CD4-positive, alpha-beta memory T cell (primary cell): ENCODE measurements at regions of chr9 and their contacts with region 1.

Region 1: GRCh38 chr9:130042833-130043653 is at the start of gene FNBP1:
- DNase-seq: peak; percentile 82 to 88 (median 84)
- H3K4me3 ChIP-seq: peak within 1 kb of the TSS; percentile 89
- H3K4me3 Mint-ChIP-seq: peak within 1 kb of the TSS; percentile 98 to 100 (median 99)
- H3K27ac ChIP-seq: peak within 1 kb of the TSS; percentile 95
- H3K27ac Mint-ChIP-seq: peak within 1 kb of the TSS; percentile 96 to 99 (median 99)
- H3K4me1 ChIP-seq: peaks cover 41% of the 10 kb centered on the region
- H3K4me1 Mint-ChIP-seq: peaks cover 32 to 69% (median 43%) of the 10 kb centered on the region in 4 donors
- H3K27me3 ChIP-seq: no peaks in the 10 kb centered on the region
- H3K27me3 Mint-ChIP-seq: no peaks in the 10 kb centered on the region
- total RNA-seq, gene FNBP1: 197 to 202 TPM

Region 2: GRCh38 chr9:129835021-129835871 is 207.8 kb before region 1 on chr9 and contains the starts of genes C9orf78 and USP20:
- CTCF ChIA-PET with region 1: no interaction called
- POLR2A ChIA-PET with region 1: interaction called, 10 read pairs
- intact Hi-C with region 1: no loop called
- DNase-seq: peak; percentile 95 to 98 (median 98)
- H3K4me3 ChIP-seq: peak within 1 kb of the TSS; percentile 76 to 98
- H3K4me3 Mint-ChIP-seq: peak within 1 kb of the TSS; percentile 96 to 99 (median 98)
- H3K27ac ChIP-seq: peak within 1 kb of the TSS; percentile 92
- H3K27ac Mint-ChIP-seq: peak within 1 kb of the TSS; percentile 97 to 99 (median 99)
- H3K4me1 ChIP-seq: peaks cover 59% of the 10 kb centered on the region
- H3K4me1 Mint-ChIP-seq: peaks cover 40 to 69% (median 56%) of the 10 kb centered on the region in 4 donors
- H3K27me3 ChIP-seq: no peaks in the 10 kb centered on the region
- H3K27me3 Mint-ChIP-seq: no peaks in the 10 kb centered on the region
- total RNA-seq, gene C9orf78: 95.5 to 96.9 TPM
- total RNA-seq, gene USP20: 123 to 132 TPM

Region 3: GRCh38 chr9:129944506-129945116 is 98.4 kb before region 1 on chr9:
- CTCF ChIA-PET with region 1: interaction called, 6 read pairs
- POLR2A ChIA-PET with region 1: interaction called, 21 read pairs
- intact Hi-C with region 1: loop called (anchors 5 kb)
- DNase-seq: peak; percentile 70 to 83 (median 80)
- H3K4me3 ChIP-seq: no peak overlapping the region
- H3K4me3 Mint-ChIP-seq: peak overlapping the region; percentile 33 to 80 (median 52)
- H3K27ac ChIP-seq: peak overlapping the region; percentile 60
- H3K27ac Mint-ChIP-seq: peak overlapping the region; percentile 35 to 92 (median 85)
- H3K4me1 ChIP-seq: peaks cover 59% of the 10 kb centered on the region
- H3K4me1 Mint-ChIP-seq: peaks cover 35 to 70% (median 50%) of the 10 kb centered on the region in 4 donors
- H3K27me3 ChIP-seq: no peaks in the 10 kb centered on the region
- H3K27me3 Mint-ChIP-seq: no peaks in the 10 kb centered on the region

Region 4: DNA sequence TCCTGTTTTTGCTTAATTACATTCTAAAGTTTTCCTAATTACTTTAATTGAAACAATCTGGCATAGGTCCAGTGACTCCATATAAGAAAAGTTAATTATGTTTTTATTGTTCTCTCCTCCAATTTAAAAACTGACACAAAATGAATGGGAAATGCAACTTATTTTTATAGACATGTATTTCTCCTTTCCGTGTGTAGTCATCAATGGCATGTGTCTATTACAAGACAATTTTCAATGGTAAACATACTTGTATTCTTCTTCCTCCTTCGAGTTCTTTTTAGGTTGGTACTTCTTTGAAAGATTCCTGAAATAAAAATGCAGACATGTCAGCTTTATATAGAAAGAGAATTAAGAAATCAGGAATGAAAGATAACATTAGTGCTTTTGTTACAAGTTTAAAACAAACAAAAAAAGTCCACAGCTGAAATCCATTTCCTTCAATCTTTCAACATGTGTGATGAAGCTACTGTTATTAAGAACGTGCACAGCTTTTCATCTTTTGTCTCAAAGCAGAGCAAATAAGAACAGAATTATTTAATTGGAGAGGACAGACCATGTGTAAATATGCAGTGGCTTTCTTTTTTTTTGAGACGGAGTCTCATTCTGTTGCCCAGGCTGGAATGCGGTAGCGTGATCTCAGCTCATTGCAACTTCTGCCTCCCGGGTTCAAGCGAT is 63.8 kb before region 1 on chr9:
- CTCF ChIA-PET with region 1: interaction called, 10 read pairs
- POLR2A ChIA-PET with region 1: interaction called, 5 read pairs
- intact Hi-C with region 1: no loop called
- DNase-seq: no peak
- H3K4me3 ChIP-seq: no peak overlapping the region
- H3K4me3 Mint-ChIP-seq: no peak overlapping the region
- H3K27ac ChIP-seq: no peak overlapping the region
- H3K27ac Mint-ChIP-seq: peak overlapping the region in 6 of 7 donors; percentile 18 to 70 (median 44)
- H3K4me1 ChIP-seq: peaks cover 24% of the 10 kb centered on the region
- H3K4me1 Mint-ChIP-seq: peaks cover 25 to 51% (median 30%) of the 10 kb centered on the region in 4 donors
- H3K27me3 ChIP-seq: no peaks in the 10 kb centered on the region
- H3K27me3 Mint-ChIP-seq: no peaks in the 10 kb centered on the region

Region 5: GRCh38 chr9:130010151-130010988 is 32.7 kb before region 1 on chr9:
- CTCF ChIA-PET with region 1: interaction called, 3 read pairs
- POLR2A ChIA-PET with region 1: interaction called, 58 read pairs
- intact Hi-C with region 1: loop called (anchors 5 kb)
- DNase-seq: peak; percentile 64 to 93 (median 74)
- H3K4me3 ChIP-seq: no peak overlapping the region
- H3K4me3 Mint-ChIP-seq: peak overlapping the region; percentile 32 to 85 (median 52)
- H3K27ac ChIP-seq: peak overlapping the region; percentile 88
- H3K27ac Mint-ChIP-seq: peak overlapping the region; percentile 93 to 100 (median 98)
- H3K4me1 ChIP-seq: peaks cover 95% of the 10 kb centered on the region
- H3K4me1 Mint-ChIP-seq: peaks cover 49 to 89% (median 67%) of the 10 kb centered on the region in 4 donors
- H3K27me3 ChIP-seq: no peaks in the 10 kb centered on the region
- H3K27me3 Mint-ChIP-seq: no peaks in the 10 kb centered on the region

Region 6: GRCh38 chr9:130053504-130054324 is 10.7 kb after region 1 on chr9 and contains the start of gene GPR107:
- CTCF ChIA-PET with region 1: interaction called, 10 read pairs
- POLR2A ChIA-PET with region 1: interaction called, 66 read pairs
- intact Hi-C with region 1: loop called (anchors 1 kb)
- DNase-seq: peak; percentile 71 to 80 (median 79)
- H3K4me3 ChIP-seq: peak within 1 kb of the TSS; percentile 67 to 98
- H3K4me3 Mint-ChIP-seq: peak within 1 kb of the TSS; percentile 90 to 95 (median 95)
- H3K27ac ChIP-seq: peak within 1 kb of the TSS; percentile 95
- H3K27ac Mint-ChIP-seq: peak within 1 kb of the TSS; percentile 91 to 97 (median 95)
- H3K4me1 ChIP-seq: peaks cover 29% of the 10 kb centered on the region
- H3K4me1 Mint-ChIP-seq: peaks cover 18 to 38% (median 28%) of the 10 kb centered on the region in 4 donors
- H3K27me3 ChIP-seq: no peaks in the 10 kb centered on the region
- H3K27me3 Mint-ChIP-seq: no peaks in the 10 kb centered on the region
- total RNA-seq, gene GPR107: 23.8 to 24.4 TPM

Region 7: DNA sequence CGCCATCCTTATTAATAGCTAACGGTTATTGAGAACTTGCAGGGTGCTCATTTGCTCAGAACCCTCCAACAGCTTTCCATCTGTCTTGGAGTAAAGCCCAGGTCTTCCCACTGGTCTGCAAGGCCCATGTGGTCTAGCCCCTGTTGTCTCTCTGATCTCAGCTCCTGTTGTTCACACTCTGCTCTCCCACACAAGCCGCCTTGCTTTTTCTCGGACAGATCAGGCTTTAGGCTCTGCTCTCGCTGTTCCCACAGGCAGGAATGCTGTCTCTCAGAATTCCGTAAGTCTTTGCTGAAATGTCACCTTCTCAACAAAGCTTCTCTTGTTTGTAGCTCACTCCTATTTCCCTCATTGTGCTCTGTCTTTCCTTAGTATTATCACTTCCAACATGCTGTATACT is 45.0 kb after region 1 on chr9:
- CTCF ChIA-PET with region 1: no interaction called
- POLR2A ChIA-PET with region 1: no interaction called
- intact Hi-C with region 1: no loop called
- DNase-seq: no peak
- H3K4me3 ChIP-seq: no peak overlapping the region
- H3K4me3 Mint-ChIP-seq: no peak overlapping the region
- H3K27ac ChIP-seq: no peak overlapping the region
- H3K27ac Mint-ChIP-seq: peak overlapping the region in 4 of 7 donors; percentile 12 to 49 (median 32)
- H3K4me1 ChIP-seq: no peaks in the 10 kb centered on the region
- H3K4me1 Mint-ChIP-seq: peaks cover 0 to 3% (median 0%) of the 10 kb centered on the region in 4 donors
- H3K27me3 ChIP-seq: no peaks in the 10 kb centered on the region
- H3K27me3 Mint-ChIP-seq: no peaks in the 10 kb centered on the region

Region 8: GRCh38 chr9:130100681-130101080 is 57.6 kb after region 1 on chr9:
- CTCF ChIA-PET with region 1: no interaction called
- POLR2A ChIA-PET with region 1: no interaction called
- intact Hi-C with region 1: no loop called
- DNase-seq: no peak
- H3K4me3 ChIP-seq: no peak overlapping the region
- H3K4me3 Mint-ChIP-seq: no peak overlapping the region
- H3K27ac ChIP-seq: no peak overlapping the region
- H3K27ac Mint-ChIP-seq: no peak overlapping the region
- H3K4me1 ChIP-seq: no peaks in the 10 kb centered on the region
- H3K4me1 Mint-ChIP-seq: peaks cover 5 to 14% (median 6%) of the 10 kb centered on the region in 4 donors
- H3K27me3 ChIP-seq: no peaks in the 10 kb centered on the region
- H3K27me3 Mint-ChIP-seq: no peaks in the 10 kb centered on the region